ENCODE measurements at regions of chr12 and their contacts with region 1.

Region 1: GRCh38 chr12:30985814-30986452 is 59.4 kb downstream of the TSPAN11 start:
- DNase-seq: peak; percentile 40
- ATAC-seq: peak; percentile 98
- H3K4me3 ChIP-seq: no peak overlapping the region
- H3K27ac ChIP-seq: no peak overlapping the region
- H3K4me1 ChIP-seq: no peaks in the 10 kb centered on the region
- H3K27me3 ChIP-seq: peaks cover 4% of the 10 kb centered on the region; the same call in 1 of the 2 replicates
- CTCF ChIP-seq: peak; percentile 67
- POLR2A ChIP-seq: no peak
- RAD21 ChIP-seq: peak; percentile 70

Region 2: GRCh38 chr12:31238764-31239387 is 252.9 kb after region 1 on chr12:
- CTCF ChIA-PET with region 1: interaction called, 3 read pairs
- POLR2A ChIA-PET with region 1: no interaction called
- dilution Hi-C with region 1: no loop called
- in situ Hi-C with region 1: no loop called
- intact Hi-C with region 1: loop called (anchors 10 kb)
- DNase-seq: peak; percentile 50
- ATAC-seq: peak; percentile 91
- H3K4me3 ChIP-seq: peak overlapping the region; percentile 24; the same call in 1 of the 2 replicates
- H3K27ac ChIP-seq: no peak overlapping the region
- H3K4me1 ChIP-seq: no peaks in the 10 kb centered on the region
- H3K27me3 ChIP-seq: peaks cover 44% of the 10 kb centered on the region
- CTCF ChIP-seq: peak; percentile 68
- POLR2A ChIP-seq: no peak
- RAD21 ChIP-seq: peak; percentile 54

Measured in IMR-90 (cell line).